B cell (primary cell): ENCODE measurements at regions of chr9 and their contacts with region 1.

Region 1: GRCh38 chr9:121698627-121699570 is 47.5 kb downstream of the DAB2IP start:
- DNase-seq: peak; percentile 63
- ATAC-seq: peak; percentile 67
- H3K4me3 ChIP-seq: peak overlapping the region in 3 of 5 experiments; percentile 12 to 56 (median 52)
- H3K4me3 Mint-ChIP-seq: peak overlapping the region; percentile 71
- H3K27ac ChIP-seq: no peak overlapping the region
- H3K27ac Mint-ChIP-seq: peak overlapping the region; percentile 41
- H3K4me1 ChIP-seq: peaks cover 27 to 31% of the 10 kb centered on the region in 2 donors
- H3K4me1 Mint-ChIP-seq: peaks cover 29% of the 10 kb centered on the region
- H3K27me3 ChIP-seq: peaks cover 0 to 38% (median 25%) of the 10 kb centered on the region in 4 experiments
- H3K27me3 Mint-ChIP-seq: peaks cover 20% of the 10 kb centered on the region
- CTCF ChIP-seq: no peak

Region 2: GRCh38 chr9:121686930-121687541 is 11.9 kb before region 1 on chr9:
- CTCF ChIA-PET with region 1: interaction called, 19 read pairs
- POLR2A ChIA-PET with region 1: no interaction called
- intact Hi-C with region 1: no loop called
- DNase-seq: peak; percentile 64
- ATAC-seq: peak; percentile 88
- H3K4me3 ChIP-seq: no peak overlapping the region
- H3K4me3 Mint-ChIP-seq: no peak overlapping the region
- H3K27ac ChIP-seq: no peak overlapping the region
- H3K27ac Mint-ChIP-seq: no peak overlapping the region
- H3K4me1 ChIP-seq: no peaks in the 10 kb centered on the region
- H3K4me1 Mint-ChIP-seq: no peaks in the 10 kb centered on the region
- H3K27me3 ChIP-seq: peaks cover 0 to 11% (median 0%) of the 10 kb centered on the region in 4 experiments
- H3K27me3 Mint-ChIP-seq: peaks cover 18% of the 10 kb centered on the region
- CTCF ChIP-seq: peak; percentile 74

Region 3: GRCh38 chr9:122092611-122093506 is 394.0 kb after region 1 on chr9 and contains the start of gene TTLL11:
- CTCF ChIA-PET with region 1: no interaction called
- POLR2A ChIA-PET with region 1: no interaction called
- intact Hi-C with region 1: loop called (anchors 5 kb)
- DNase-seq: peak; percentile 97
- ATAC-seq: peak; percentile 94
- H3K4me3 ChIP-seq: peak within 1 kb of the TSS; percentile 46 to 78 (median 77)
- H3K4me3 Mint-ChIP-seq: peak within 1 kb of the TSS; percentile 90
- H3K27ac ChIP-seq: peak within 1 kb of the TSS in 1 of 2 donors; percentile 60
- H3K27ac Mint-ChIP-seq: peak within 1 kb of the TSS; percentile 33
- H3K4me1 ChIP-seq: peaks cover 24 to 29% of the 10 kb centered on the region in 2 donors
- H3K4me1 Mint-ChIP-seq: peaks cover 45% of the 10 kb centered on the region
- H3K27me3 ChIP-seq: no peaks in the 10 kb centered on the region
- H3K27me3 Mint-ChIP-seq: peaks cover 9% of the 10 kb centered on the region
- CTCF ChIP-seq: no peak
- total RNA-seq, gene TTLL11: 3.8 and 3.9 TPM in 2 replicates